ENCODE measurements at regions of chr9 and their contacts with region 1.

Region 1: DNA sequence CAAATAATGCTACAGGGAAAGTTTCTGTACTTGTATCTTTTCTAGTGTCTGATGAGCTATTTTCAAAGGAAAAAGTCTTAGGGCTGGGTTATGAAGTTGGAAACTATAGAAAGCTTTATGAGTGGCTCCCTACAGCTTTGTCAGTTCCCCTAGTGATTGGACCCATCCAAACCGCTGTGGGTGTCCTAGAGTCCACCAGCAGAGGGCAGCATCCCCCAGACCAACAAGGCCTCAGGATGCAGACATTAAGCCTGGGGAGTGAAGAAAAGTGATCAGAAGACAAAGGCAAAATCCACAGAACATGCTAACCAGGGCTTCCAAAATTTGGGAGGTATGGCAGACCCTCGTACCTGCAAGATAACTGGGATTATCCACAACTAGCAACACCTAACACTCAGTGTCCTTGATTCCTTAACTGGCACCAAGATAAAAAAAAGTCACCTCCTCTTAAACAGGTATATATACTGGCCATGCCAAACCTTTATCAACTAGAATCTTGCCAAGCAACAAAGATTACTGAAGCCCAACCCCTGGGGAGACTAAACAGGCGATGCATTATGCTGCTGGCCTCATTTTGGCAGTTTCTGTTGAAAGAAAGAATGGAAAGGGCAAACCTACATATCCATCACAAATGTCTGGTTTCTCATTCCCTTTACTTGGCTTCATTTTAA is 110.4 kb upstream of the NR5A1 start:
- DNase-seq: peak; percentile 77
- ATAC-seq: peak; percentile 95 to 96
- H3K4me3 ChIP-seq: no peak overlapping the region
- H3K27ac ChIP-seq: no peak overlapping the region
- H3K4me1 ChIP-seq: no peaks in the 10 kb centered on the region
- H3K27me3 ChIP-seq: no peaks in the 10 kb centered on the region
- CTCF ChIP-seq: peak; percentile 91

Region 2: GRCh38 chr9:124551472-124552272 is 65.9 kb before region 1 on chr9:
- intact Hi-C with region 1: no loop called
- DNase-seq: peak; percentile 53
- ATAC-seq: peak; percentile 78 to 86
- H3K4me3 ChIP-seq: no peak overlapping the region
- H3K27ac ChIP-seq: no peak overlapping the region
- H3K4me1 ChIP-seq: no peaks in the 10 kb centered on the region
- H3K27me3 ChIP-seq: no peaks in the 10 kb centered on the region
- CTCF ChIP-seq: peak; percentile 51

Region 3: GRCh38 chr9:124710766-124711165 is 93.2 kb after region 1 on chr9:
- intact Hi-C with region 1: loop called (anchors 5 kb)
- DNase-seq: no peak
- ATAC-seq: no peak
- H3K4me3 ChIP-seq: no peak overlapping the region
- H3K27ac ChIP-seq: no peak overlapping the region
- H3K4me1 ChIP-seq: no peaks in the 10 kb centered on the region
- H3K27me3 ChIP-seq: no peaks in the 10 kb centered on the region
- CTCF ChIP-seq: no peak